ENCODE measurements at regions of chr15 and their contacts with region 1.

Region 1: GRCh38 chr15:89057504-89058133 is 30.6 kb upstream of the ABHD2 start:
- H3K4me3 ChIP-seq: no peak overlapping the region
- H3K27ac ChIP-seq: no peak overlapping the region
- H3K4me1 ChIP-seq: no peaks in the 10 kb centered on the region
- CTCF ChIP-seq: peak; percentile 87; the same call in 1 of the 2 replicates

Region 2: DNA sequence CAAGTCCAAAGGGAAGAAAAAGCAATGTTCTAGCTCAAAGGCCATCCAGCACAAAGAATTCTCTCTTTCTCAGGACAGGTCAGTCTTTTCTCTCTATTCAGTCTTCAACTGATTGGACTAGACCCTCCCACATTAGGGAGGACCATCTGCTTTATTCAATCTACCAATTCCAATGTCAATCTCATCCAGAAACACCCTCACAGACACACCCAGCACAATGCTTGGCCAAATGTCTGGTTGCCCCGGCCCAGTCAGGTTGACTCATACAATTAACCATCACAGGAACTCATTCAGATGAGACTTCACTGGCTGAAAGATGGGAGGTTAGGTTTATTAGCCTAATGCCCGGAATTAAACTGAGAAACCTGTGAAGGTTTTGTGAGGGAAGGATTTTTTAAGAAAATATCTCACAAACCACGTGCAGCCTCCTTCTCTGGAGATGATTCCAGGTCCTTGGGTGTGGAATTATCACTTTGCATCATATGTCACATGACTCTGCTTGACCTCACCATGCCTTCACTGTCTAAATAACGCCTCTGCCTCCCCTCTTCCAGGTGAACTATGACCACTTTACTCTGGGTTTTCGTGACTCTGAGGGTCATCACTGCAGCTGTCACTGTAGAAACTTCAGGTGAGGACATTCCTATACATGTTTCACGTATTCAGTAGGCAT is 221.8 kb before region 1 on chr15:
- CTCF ChIA-PET with region 1: no interaction called
- POLR2A ChIA-PET with region 1: no interaction called
- H3K4me3 ChIP-seq: no peak overlapping the region
- H3K27ac ChIP-seq: no peak overlapping the region
- H3K4me1 ChIP-seq: no peaks in the 10 kb centered on the region
- CTCF ChIP-seq: no peak

Region 3: DNA sequence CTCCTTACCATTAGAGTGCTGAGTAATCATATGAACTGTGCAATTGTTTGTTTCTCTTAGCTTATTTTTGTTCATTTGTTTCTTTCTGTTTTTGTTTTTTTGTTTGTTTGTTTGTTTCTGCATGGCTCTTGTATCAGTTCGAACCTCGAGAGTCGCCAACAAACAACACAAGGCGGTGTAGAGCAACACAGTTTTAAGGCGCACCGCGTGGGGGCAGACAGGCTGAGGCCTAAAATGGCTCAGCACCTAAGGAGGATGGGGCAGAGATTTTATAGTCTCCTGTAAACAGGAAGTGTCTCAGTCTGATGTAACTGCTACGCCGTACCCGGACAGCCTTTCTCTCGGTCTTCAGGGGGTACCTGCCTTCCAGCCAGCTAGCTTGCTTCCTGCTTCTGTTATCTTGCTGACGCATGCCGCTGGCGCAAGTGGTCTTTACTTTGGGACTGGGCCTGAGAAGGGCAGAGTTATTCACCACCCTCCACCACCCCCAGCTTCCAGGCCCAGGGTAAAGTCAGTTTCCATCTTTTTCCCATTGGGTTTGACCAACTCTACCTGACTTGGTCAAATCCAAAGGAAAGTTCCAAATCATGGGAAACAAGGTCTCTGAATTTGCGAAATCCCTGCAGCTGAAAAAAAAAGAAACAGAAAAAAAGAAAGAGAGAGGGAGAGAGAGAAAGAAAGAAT is 118.7 kb before region 1 on chr15:
- CTCF ChIA-PET with region 1: no interaction called
- POLR2A ChIA-PET with region 1: no interaction called
- H3K4me3 ChIP-seq: no peak overlapping the region
- H3K27ac ChIP-seq: no peak overlapping the region
- H3K4me1 ChIP-seq: no peaks in the 10 kb centered on the region
- CTCF ChIP-seq: no peak

Region 4: DNA sequence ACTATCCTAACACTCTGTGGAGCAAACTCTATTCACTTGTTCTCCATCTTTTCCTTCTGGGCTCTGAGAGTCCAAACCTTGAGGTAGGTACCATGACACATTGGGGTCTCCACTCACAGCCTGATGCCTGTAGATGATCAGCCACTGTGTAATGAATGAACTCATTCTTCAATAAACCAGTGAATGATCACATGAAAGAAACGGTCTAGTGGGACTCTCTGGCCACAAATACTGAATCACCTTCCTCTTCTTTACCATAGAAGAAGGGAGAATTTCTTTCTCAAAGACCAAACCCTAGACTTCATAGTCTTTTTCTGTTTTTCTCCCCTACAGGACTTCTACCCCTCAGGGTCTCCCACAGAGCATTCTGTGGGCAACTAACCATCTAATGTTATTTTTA is 10.1 kb after region 1 on chr15:
- CTCF ChIA-PET with region 1: interaction called, 27 read pairs
- POLR2A ChIA-PET with region 1: interaction called, 4 read pairs
- H3K4me3 ChIP-seq: no peak overlapping the region
- H3K27ac ChIP-seq: peak overlapping the region; percentile 0; the same call in 1 of the 2 replicates
- H3K4me1 ChIP-seq: no peaks in the 10 kb centered on the region
- CTCF ChIP-seq: no peak

Region 5: GRCh38 chr15:89087830-89088604 is 30.4 kb after region 1 on chr15 and contains the start of gene ABHD2:
- CTCF ChIA-PET with region 1: interaction called, 55 read pairs
- POLR2A ChIA-PET with region 1: interaction called, 5 read pairs
- H3K4me3 ChIP-seq: peak within 1 kb of the TSS; percentile 90
- H3K27ac ChIP-seq: peak within 1 kb of the TSS; percentile 55; the same call in 1 of the 2 replicates
- H3K4me1 ChIP-seq: peaks cover 28% of the 10 kb centered on the region
- CTCF ChIP-seq: no peak

Region 6: GRCh38 chr15:89112341-89112971 is 54.8 kb after region 1 on chr15:
- CTCF ChIA-PET with region 1: interaction called, 25 read pairs
- POLR2A ChIA-PET with region 1: no interaction called
- H3K4me3 ChIP-seq: no peak overlapping the region
- H3K27ac ChIP-seq: no peak overlapping the region
- H3K4me1 ChIP-seq: no peaks in the 10 kb centered on the region; the same call in 1 of the 2 replicates
- CTCF ChIP-seq: no peak

Region 7: GRCh38 chr15:89150762-89151664 is 93.4 kb after region 1 on chr15:
- CTCF ChIA-PET with region 1: interaction called, 20 read pairs
- POLR2A ChIA-PET with region 1: no interaction called
- H3K4me3 ChIP-seq: no peak overlapping the region
- H3K27ac ChIP-seq: no peak overlapping the region
- H3K4me1 ChIP-seq: no peaks in the 10 kb centered on the region; the same call in 1 of the 2 replicates
- CTCF ChIP-seq: no peak

Measured in HEK293 (cell line).